Activated B cell treated with CpG ODN at 0.5 μM for 24 hours (primary cell): ENCODE measurements at regions of chr14 and their contacts with region 1.

Region 1: DNA sequence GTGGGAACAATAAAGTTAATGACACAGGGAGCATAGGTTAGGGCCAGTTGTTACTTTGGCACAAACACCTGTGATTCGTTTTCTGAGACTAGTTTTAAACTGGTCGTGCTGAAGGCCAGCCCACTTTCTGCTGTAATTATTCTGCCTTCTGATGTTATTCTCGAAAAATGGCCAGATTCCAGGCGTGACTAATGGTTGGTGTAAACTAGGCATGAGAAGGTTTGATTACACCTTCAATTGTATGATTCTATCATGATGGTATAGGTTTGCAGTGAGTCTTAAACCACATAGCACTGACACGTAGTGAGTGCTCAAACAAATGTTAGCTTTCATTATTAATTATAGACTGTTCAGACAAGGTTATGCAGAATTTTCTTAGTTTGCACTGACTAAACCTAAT is 39.0 kb downstream of the CKB start:
- DNase-seq: no peak
- ATAC-seq: no peak
- H3K4me3 Mint-ChIP-seq: no peak overlapping the region
- H3K27ac Mint-ChIP-seq: no peak overlapping the region
- H3K4me1 Mint-ChIP-seq: peaks cover 18% of the 10 kb centered on the region
- H3K27me3 Mint-ChIP-seq: no peaks in the 10 kb centered on the region
- CTCF ChIP-seq: no peak

Region 2: GRCh38 chr14:103472939-103473338 is 10.7 kb before region 1 on chr14:
- CTCF ChIA-PET with region 1: no interaction called
- POLR2A ChIA-PET with region 1: interaction called, 15 read pairs
- intact Hi-C with region 1: no loop called
- DNase-seq: no peak
- ATAC-seq: no peak
- H3K4me3 Mint-ChIP-seq: no peak overlapping the region
- H3K27ac Mint-ChIP-seq: no peak overlapping the region
- H3K4me1 Mint-ChIP-seq: peaks cover 3% of the 10 kb centered on the region
- H3K27me3 Mint-ChIP-seq: no peaks in the 10 kb centered on the region
- CTCF ChIP-seq: no peak